CD8-positive, alpha-beta memory T cell (primary cell): ENCODE measurements at regions of chr10 and their contacts with region 1.

Region 1: DNA sequence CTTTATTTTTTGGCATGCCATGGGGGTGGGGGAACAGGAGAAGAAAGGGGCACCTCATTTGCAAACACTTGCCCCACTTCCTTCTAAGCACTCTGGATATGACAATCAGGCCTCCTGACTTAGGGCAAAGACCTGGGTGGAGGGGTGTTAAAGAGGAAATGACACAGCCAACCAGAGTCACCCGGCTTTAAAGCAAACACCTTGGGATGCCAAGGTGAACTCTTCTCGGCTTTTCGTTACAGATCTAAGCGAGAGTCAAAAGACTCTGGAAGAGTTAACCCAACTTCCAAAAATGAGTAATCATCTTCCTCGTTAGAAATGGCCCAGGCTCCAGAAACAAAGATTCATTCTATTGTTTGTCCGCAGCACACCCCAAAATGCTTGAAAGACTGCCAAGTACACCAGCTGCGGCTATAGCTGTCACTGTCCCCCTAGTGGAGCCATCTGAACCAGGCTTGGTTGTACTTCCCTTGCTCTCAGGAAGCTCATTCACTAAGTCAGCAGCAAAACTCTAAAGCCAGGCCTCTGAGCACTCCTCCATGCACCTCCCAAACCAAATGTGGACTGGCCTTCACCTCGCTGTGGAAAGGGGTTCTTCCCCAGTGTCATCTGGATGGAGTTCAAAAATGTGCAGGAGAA is 24.8 kb downstream of the FAM53B start:
- DNase-seq: peak; percentile 54 to 85 (median 77)
- H3K4me3 ChIP-seq: peak overlapping the region; percentile 42
- H3K4me3 Mint-ChIP-seq: peak overlapping the region; percentile 35 to 85 (median 82)
- H3K27ac ChIP-seq: peak overlapping the region; percentile 77
- H3K27ac Mint-ChIP-seq: peak overlapping the region; percentile 88 to 99 (median 98)
- H3K4me1 ChIP-seq: peaks cover 99% of the 10 kb centered on the region
- H3K4me1 Mint-ChIP-seq: peaks cover 92 to 99% (median 97%) of the 10 kb centered on the region in 3 donors
- H3K27me3 ChIP-seq: no peaks in the 10 kb centered on the region
- H3K27me3 Mint-ChIP-seq: peaks cover 0 to 2% of the 10 kb centered on the region in 2 donors

Region 2: DNA sequence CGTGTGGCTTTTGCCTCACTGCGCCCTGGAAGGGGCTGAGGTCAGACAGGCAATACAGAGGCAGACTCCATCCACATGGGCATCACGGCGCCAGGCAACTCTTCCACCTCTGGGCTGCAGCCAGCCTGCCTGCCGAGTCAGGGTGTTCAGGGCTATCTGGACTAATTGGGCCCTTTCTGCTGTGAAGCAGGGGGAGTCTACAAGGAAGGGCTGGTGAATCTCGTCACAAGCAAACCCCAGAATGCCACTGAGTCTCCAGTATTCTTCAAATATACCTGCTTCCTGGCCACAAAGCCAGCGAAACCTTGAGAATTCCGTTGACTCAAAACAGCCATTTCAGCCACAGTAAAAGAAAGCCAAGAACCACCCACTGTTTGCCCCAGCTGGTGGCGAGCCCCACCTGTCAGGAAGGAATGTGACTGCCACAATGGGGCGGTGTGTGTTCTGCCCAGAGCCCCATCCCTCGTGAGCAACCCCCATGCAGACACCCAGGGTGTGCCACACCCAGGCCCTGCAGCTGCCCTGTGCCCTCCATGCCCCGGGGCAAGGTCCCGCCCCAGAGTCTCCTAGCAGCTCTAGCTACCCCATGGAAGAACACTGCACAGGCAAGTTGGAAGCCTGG is 92.5 kb before region 1 on chr10:
- CTCF ChIA-PET with region 1: interaction called, 29 read pairs
- POLR2A ChIA-PET with region 1: interaction called, 7 read pairs
- DNase-seq: peak in 4 of 5 donors; percentile 14 to 68 (median 39)
- H3K4me3 ChIP-seq: peak overlapping the region; percentile 37
- H3K4me3 Mint-ChIP-seq: peak overlapping the region in 6 of 7 donors; percentile 43 to 73 (median 67)
- H3K27ac ChIP-seq: no peak overlapping the region
- H3K27ac Mint-ChIP-seq: peak overlapping the region; percentile 78 to 95 (median 90)
- H3K4me1 ChIP-seq: peaks cover 53% of the 10 kb centered on the region
- H3K4me1 Mint-ChIP-seq: peaks cover 55 to 80% (median 61%) of the 10 kb centered on the region in 3 donors
- H3K27me3 ChIP-seq: no peaks in the 10 kb centered on the region
- H3K27me3 Mint-ChIP-seq: no peaks in the 10 kb centered on the region

Region 3: DNA sequence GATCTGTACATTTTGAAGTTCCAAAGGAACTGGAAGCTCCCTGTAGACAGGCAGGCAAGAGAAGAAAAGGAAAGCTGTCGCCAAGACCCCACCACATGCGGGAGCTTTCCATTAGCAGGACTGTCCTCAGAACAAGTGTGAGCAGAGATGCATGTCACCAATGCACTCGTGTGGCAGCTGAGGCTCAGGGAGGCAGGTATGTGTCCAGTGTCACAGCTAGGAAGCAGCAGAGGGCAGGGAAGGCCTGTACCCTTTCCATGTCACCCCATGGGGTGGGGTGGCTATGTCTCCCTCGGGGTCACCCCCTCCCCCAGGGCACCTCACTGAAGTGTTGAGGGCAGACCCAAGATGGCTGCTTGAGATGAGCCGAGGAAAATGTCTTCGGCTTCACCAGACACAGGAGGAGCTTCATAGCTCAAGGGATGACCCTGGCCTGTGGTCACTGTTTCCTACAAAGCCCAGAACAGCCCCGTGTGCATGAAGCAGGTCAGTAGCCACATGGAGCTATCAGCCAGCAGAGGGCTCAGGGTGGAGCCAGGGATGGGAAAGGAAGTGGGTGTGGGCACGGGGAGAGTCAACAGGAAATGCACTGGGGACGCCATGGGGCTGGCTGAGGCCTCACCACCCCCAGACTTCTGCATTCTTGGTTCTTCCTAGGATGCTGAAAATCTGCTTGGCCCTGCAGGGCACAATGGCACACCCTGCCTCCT is 71.8 kb before region 1 on chr10:
- CTCF ChIA-PET with region 1: interaction called, 110 read pairs
- POLR2A ChIA-PET with region 1: interaction called, 35 read pairs
- DNase-seq: peak; percentile 64 to 86 (median 66)
- H3K4me3 ChIP-seq: peak overlapping the region; percentile 41
- H3K4me3 Mint-ChIP-seq: peak overlapping the region; percentile 75 to 95 (median 84)
- H3K27ac ChIP-seq: peak overlapping the region; percentile 75
- H3K27ac Mint-ChIP-seq: peak overlapping the region; percentile 96 to 100 (median 98)
- H3K4me1 ChIP-seq: peaks cover 90% of the 10 kb centered on the region
- H3K4me1 Mint-ChIP-seq: peaks cover 92 to 100% (median 94%) of the 10 kb centered on the region in 3 donors
- H3K27me3 ChIP-seq: no peaks in the 10 kb centered on the region
- H3K27me3 Mint-ChIP-seq: no peaks in the 10 kb centered on the region

Region 4: DNA sequence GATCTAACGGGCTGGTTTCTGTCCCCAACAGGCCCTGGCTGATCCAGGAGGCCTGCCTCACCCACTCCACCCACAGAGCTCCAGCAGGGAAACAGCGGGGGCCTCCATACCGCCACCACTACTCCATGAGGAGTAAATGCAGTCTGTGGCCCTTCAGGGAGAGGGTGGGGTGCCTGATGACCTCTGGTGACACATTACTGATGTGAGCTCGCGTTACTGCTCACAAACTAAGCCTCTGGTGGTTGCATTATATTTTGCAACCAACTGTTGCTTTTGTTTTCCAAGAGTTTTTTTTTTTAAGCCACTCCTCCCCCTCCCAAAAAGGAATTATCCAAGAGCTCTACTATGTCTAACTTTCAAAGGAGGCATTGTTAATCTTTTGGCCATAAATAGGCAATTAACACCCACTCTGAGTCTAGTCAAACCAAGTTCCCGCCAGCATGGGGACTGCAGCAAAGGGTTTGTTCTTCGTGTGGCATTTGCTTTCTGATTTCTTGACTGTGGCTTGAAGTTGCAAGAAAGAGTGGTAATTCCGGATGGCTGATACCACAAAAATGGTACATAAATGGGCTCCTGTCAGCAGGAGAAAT is 47.8 kb before region 1 on chr10:
- CTCF ChIA-PET with region 1: interaction called, 65 read pairs
- POLR2A ChIA-PET with region 1: interaction called, 5 read pairs
- DNase-seq: no peak
- H3K4me3 ChIP-seq: peak overlapping the region; percentile 3
- H3K4me3 Mint-ChIP-seq: peak overlapping the region; percentile 14 to 85 (median 59)
- H3K27ac ChIP-seq: peak overlapping the region; percentile 5
- H3K27ac Mint-ChIP-seq: peak overlapping the region; percentile 76 to 97 (median 88)
- H3K4me1 ChIP-seq: peaks cover 100% of the 10 kb centered on the region
- H3K4me1 Mint-ChIP-seq: peaks cover 87 to 98% (median 95%) of the 10 kb centered on the region in 3 donors
- H3K27me3 ChIP-seq: no peaks in the 10 kb centered on the region
- H3K27me3 Mint-ChIP-seq: no peaks in the 10 kb centered on the region

Region 5: GRCh38 chr10:124688889-124689670 is 30.3 kb before region 1 on chr10:
- CTCF ChIA-PET with region 1: interaction called, 36 read pairs
- POLR2A ChIA-PET with region 1: interaction called, 22 read pairs
- DNase-seq: peak in 4 of 5 donors; percentile 43 to 82 (median 62)
- H3K4me3 ChIP-seq: no peak overlapping the region
- H3K4me3 Mint-ChIP-seq: peak overlapping the region; percentile 1 to 87 (median 75)
- H3K27ac ChIP-seq: peak overlapping the region; percentile 48
- H3K27ac Mint-ChIP-seq: peak overlapping the region; percentile 82 to 99 (median 96)
- H3K4me1 ChIP-seq: peaks cover 79% of the 10 kb centered on the region
- H3K4me1 Mint-ChIP-seq: peaks cover 73 to 93% (median 93%) of the 10 kb centered on the region in 3 donors
- H3K27me3 ChIP-seq: no peaks in the 10 kb centered on the region
- H3K27me3 Mint-ChIP-seq: no peaks in the 10 kb centered on the region

Region 6: DNA sequence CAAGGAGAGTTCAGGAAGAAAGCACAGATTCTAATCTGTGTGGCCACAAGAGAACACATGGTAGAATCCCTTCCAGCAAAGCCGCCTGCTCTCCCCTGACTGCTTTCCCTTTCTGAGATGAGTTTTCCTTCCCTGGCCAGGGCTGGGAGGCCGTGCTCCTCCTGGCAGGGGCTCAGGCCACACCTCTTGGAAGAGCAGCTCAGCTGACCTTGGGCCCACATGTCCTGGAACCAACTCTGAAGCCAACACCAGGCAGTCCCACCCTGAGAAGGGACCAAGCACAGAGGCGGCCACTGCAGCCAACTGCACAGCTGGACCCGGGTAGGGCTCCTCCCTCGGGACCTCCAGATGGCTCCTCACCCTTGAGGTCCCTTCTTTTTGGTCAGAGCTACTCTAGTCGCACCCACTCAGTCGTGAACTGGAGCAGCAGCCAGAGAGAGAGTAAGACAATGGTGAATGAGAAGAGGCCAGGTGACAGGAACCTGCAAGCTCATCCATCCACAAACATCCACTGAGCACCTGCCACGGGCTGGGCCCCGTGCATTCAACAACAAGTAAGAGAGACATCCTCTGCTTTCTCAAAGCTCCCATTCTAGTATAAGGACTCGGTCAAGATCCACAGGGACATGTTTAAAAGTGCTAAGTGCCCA is 15.4 kb before region 1 on chr10:
- CTCF ChIA-PET with region 1: interaction called, 312 read pairs
- POLR2A ChIA-PET with region 1: interaction called, 18 read pairs
- DNase-seq: peak in 1 of 5 donors; percentile 11
- H3K4me3 ChIP-seq: no peak overlapping the region
- H3K4me3 Mint-ChIP-seq: peak overlapping the region in 4 of 7 donors; percentile 34 to 70 (median 52)
- H3K27ac ChIP-seq: no peak overlapping the region
- H3K27ac Mint-ChIP-seq: peak overlapping the region; percentile 93 to 99 (median 98)
- H3K4me1 ChIP-seq: peaks cover 99% of the 10 kb centered on the region
- H3K4me1 Mint-ChIP-seq: peaks cover 95 to 100% (median 99%) of the 10 kb centered on the region in 3 donors
- H3K27me3 ChIP-seq: no peaks in the 10 kb centered on the region
- H3K27me3 Mint-ChIP-seq: no peaks in the 10 kb centered on the region

Region 7: GRCh38 chr10:124732931-124733570 is 13.7 kb after region 1 on chr10:
- CTCF ChIA-PET with region 1: interaction called, 397 read pairs
- POLR2A ChIA-PET with region 1: interaction called, 15 read pairs
- DNase-seq: peak in 3 of 5 donors; percentile 42 to 74 (median 46)
- H3K4me3 ChIP-seq: peak overlapping the region; percentile 33
- H3K4me3 Mint-ChIP-seq: peak overlapping the region; percentile 67 to 95 (median 82)
- H3K27ac ChIP-seq: peak overlapping the region; percentile 65
- H3K27ac Mint-ChIP-seq: peak overlapping the region; percentile 89 to 99 (median 96)
- H3K4me1 ChIP-seq: peaks cover 100% of the 10 kb centered on the region
- H3K4me1 Mint-ChIP-seq: peaks cover 95 to 100% (median 97%) of the 10 kb centered on the region in 3 donors
- H3K27me3 ChIP-seq: no peaks in the 10 kb centered on the region
- H3K27me3 Mint-ChIP-seq: no peaks in the 10 kb centered on the region

Region 8: GRCh38 chr10:124763267-124763666 is 43.9 kb after region 1 on chr10:
- CTCF ChIA-PET with region 1: no interaction called
- POLR2A ChIA-PET with region 1: no interaction called
- DNase-seq: no peak
- H3K4me3 ChIP-seq: no peak overlapping the region
- H3K4me3 Mint-ChIP-seq: no peak overlapping the region
- H3K27ac ChIP-seq: no peak overlapping the region
- H3K27ac Mint-ChIP-seq: no peak overlapping the region
- H3K4me1 ChIP-seq: no peaks in the 10 kb centered on the region
- H3K4me1 Mint-ChIP-seq: no peaks in the 10 kb centered on the region
- H3K27me3 ChIP-seq: no peaks in the 10 kb centered on the region
- H3K27me3 Mint-ChIP-seq: no peaks in the 10 kb centered on the region